ENCODE measurements at regions of chr5 and their contacts with region 1.

Region 1: GRCh38 chr5:149381987-149382340 is 2.9 kb upstream of the IL17B start:
- DNase-seq: peak; percentile 89
- H3K4me3 ChIP-seq: peak overlapping the region; percentile 9 to 22
- H3K27ac ChIP-seq: peak overlapping the region; percentile 93 to 95
- H3K4me1 ChIP-seq: peaks cover 12 to 27% of the 10 kb centered on the region in 2 donors
- H3K27me3 ChIP-seq: no peaks in the 10 kb centered on the region
- CTCF ChIP-seq: peak; percentile 91 to 96 (median 96)
- POLR2A ChIP-seq: no peak

Region 2: GRCh38 chr5:149416987-149417710 is 35.2 kb after region 1 on chr5:
- intact Hi-C with region 1: loop called (anchors 5 kb)
- DNase-seq: peak; percentile 52 to 67
- H3K4me3 ChIP-seq: peak overlapping the region; percentile 24 to 88
- H3K27ac ChIP-seq: peak overlapping the region; percentile 99
- H3K4me1 ChIP-seq: peaks cover 9 to 21% of the 10 kb centered on the region in 2 donors
- H3K27me3 ChIP-seq: no peaks in the 10 kb centered on the region
- CTCF ChIP-seq: peak in 1 of 4 experiments; percentile 17
- POLR2A ChIP-seq: peak in 1 of 2 donors; percentile 7

Region 3: GRCh38 chr5:149434162-149435014 is 52.4 kb after region 1 on chr5:
- intact Hi-C with region 1: loop called (anchors 5 kb)
- DNase-seq: peak; percentile 74 to 86
- H3K4me3 ChIP-seq: no peak overlapping the region
- H3K27ac ChIP-seq: peak overlapping the region; percentile 99
- H3K4me1 ChIP-seq: no peaks in the 10 kb centered on the region
- H3K27me3 ChIP-seq: no peaks in the 10 kb centered on the region
- CTCF ChIP-seq: peak; percentile 76 to 85 (median 80)
- POLR2A ChIP-seq: no peak